GM10248 (cell line): ENCODE measurements at regions of chr15 and their contacts with region 1.

Region 1: GRCh38 chr15:63514531-63514943 is 10.1 kb downstream of the USP3 start:
- DNase-seq: no peak
- CTCF ChIP-seq: no peak

Region 2: DNA sequence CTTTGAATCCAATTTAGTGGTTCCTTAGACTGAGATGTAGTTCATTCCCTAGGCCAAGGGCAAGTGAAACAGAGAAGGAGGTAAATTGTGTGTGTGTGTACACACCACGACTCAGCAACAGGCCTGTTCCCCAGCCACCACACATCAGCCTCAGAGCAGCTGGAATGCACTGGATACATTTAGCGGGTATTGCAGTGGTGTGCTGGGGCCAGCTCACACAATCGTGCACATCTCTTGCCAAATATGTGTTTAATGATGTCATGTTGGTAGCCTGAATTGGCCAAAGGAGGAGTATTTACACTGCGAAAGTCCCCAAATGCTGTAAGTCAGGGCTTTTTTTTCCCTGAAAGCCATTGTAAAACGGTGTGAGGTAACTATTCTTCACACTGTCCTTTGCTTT is 1178.6 kb after region 1 on chr15:
- CTCF ChIA-PET with region 1: no interaction called
- POLR2A ChIA-PET with region 1: interaction called, 13 read pairs
- DNase-seq: no peak
- CTCF ChIP-seq: no peak